PC-3 (cell line): ENCODE measurements at regions of chr11 and their contacts with region 1.

Region 1: DNA sequence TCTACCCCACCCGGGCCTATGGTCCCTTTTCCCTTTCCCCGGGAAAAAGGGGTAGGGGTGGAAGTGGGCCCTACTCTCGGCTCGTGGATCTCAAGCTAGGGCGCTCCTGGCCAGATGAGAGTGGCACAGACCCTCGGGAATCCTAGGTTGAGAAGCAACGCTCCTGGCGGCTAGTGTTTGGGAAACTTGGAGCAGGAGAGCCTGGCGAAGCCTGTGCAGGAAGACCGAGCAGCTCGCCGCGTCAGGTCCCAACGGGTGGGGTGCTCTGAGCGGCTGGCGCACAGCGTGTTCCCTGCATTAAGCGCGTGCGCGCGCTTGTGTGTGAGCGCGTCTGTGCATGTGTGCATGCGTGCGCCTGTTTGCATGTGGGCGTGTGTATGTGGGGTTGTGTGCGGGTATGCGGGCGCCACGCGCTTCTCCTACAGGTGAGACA is 7.1 kb upstream of the FLI1 start:
- DNase-seq: peak; percentile 21
- ATAC-seq: peak; percentile 57
- H3K4me3 ChIP-seq: peak overlapping the region; percentile 47; the same call in 1 of the 2 replicates
- H3K27ac ChIP-seq: no peak overlapping the region
- H3K4me1 ChIP-seq: peaks cover 7% of the 10 kb centered on the region; the same call in 1 of the 2 replicates
- H3K27me3 ChIP-seq: peaks cover 92% of the 10 kb centered on the region
- CTCF ChIP-seq: no peak

Region 2: GRCh38 chr11:128734103-128734831 is 47.5 kb after region 1 on chr11:
- CTCF ChIA-PET with region 1: no interaction called
- POLR2A ChIA-PET with region 1: no interaction called
- intact Hi-C with region 1: no loop called
- DNase-seq: no peak
- ATAC-seq: no peak
- H3K4me3 ChIP-seq: no peak overlapping the region
- H3K27ac ChIP-seq: no peak overlapping the region
- H3K4me1 ChIP-seq: no peaks in the 10 kb centered on the region
- H3K27me3 ChIP-seq: peaks cover 3% of the 10 kb centered on the region; the same call in 1 of the 2 replicates
- CTCF ChIP-seq: no peak

Region 3: GRCh38 chr11:128796270-128796669 is 109.5 kb after region 1 on chr11:
- CTCF ChIA-PET with region 1: interaction called, 10 read pairs
- POLR2A ChIA-PET with region 1: no interaction called
- intact Hi-C with region 1: no loop called
- DNase-seq: peak; percentile 52
- ATAC-seq: peak; percentile 74
- H3K4me3 ChIP-seq: no peak overlapping the region
- H3K27ac ChIP-seq: no peak overlapping the region
- H3K4me1 ChIP-seq: peaks cover 6% of the 10 kb centered on the region; the same call in 1 of the 2 replicates
- H3K27me3 ChIP-seq: no peaks in the 10 kb centered on the region
- CTCF ChIP-seq: no peak

Region 4: DNA sequence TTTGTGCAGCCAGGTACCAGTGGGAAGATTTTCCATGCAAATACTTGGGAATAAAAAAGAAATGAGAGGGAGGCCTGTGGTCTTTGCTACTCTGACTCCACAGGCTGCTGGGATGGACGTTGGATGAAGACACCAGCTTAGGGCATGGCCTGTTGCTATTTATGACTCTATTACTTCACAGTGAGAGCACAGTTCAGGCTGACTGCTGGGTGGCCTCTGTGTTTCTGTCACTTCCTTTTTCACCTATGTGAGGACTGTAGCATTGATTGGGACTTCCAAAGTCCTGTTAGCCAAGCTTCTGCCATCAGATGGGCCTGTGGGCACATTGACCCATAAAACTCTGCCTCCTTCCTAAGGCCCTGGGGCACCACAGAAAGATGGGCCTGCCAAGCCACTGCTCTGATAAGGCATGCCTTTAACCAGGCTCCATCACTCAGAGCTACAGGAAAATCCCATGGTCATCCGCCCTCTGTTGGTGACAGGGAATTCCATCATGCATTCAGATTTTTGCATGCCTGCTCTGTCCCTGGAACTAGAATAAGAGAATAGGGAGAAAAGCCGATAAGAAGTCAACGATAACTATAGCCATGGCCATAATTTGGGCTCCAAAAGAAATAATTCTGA is 115.7 kb after region 1 on chr11:
- CTCF ChIA-PET with region 1: interaction called, 10 read pairs
- POLR2A ChIA-PET with region 1: no interaction called
- intact Hi-C with region 1: no loop called
- DNase-seq: peak; percentile 72
- ATAC-seq: peak; percentile 92
- H3K4me3 ChIP-seq: no peak overlapping the region
- H3K27ac ChIP-seq: no peak overlapping the region
- H3K4me1 ChIP-seq: no peaks in the 10 kb centered on the region
- H3K27me3 ChIP-seq: no peaks in the 10 kb centered on the region
- CTCF ChIP-seq: peak; percentile 86